ENCODE measurements at regions of chr1 and their contacts with region 1.

Region 1: DNA sequence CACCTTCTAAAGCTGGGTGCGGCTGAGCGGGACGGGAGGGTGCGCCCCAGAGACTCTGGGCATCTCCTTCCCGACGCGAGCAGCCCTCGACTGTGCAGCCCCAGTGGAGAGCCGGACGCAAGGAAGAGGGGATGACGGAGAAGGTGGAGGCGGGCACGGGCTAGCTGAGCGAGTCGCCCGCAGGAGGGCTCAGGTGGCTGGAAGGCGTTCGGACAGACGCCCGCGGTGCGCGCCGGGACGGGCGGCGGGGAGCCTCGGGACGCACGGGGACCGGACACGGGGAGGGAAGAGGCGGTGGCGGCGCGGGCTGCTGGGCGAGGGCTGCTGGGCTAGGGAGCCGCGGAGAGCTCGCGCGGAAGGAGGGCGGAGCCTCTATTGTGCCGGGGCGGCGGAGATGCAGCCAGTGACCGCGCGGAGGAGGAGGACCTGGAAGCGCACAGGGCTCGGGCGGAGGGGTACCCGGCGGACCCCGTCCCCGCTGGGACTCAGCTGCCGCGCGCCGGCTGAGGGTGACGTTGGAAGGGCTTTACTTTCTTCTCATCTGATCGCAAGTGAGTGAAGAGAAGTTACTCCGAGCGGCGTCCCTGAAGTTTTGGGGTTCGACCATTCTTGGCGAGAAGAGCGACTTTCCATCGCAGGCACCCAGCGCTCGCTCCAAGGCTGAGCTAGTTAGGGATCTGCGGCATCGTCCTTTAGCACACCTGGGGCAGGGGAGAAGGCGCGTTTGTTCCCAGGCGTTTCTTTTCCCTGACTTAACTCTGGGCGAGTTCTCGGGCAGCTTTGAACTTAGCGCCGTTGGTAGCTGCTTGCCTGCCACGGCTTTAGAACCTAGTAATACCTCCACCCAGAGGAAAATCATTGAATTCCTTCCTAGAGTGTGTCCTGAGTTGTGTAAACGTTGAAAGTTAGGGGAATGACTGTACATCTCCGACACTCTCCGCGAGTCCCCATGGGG is at the start of gene OLFML2B:
- DNase-seq: peak; percentile 60
- H3K4me3 ChIP-seq: peak within 1 kb of the TSS; percentile 37 to 64 (median 54)
- H3K27ac ChIP-seq: peak within 1 kb of the TSS; percentile 30 to 84 (median 68)
- H3K4me1 ChIP-seq: peaks cover 3 to 20% (median 14%) of the 10 kb centered on the region in 4 donors
- H3K27me3 ChIP-seq: peaks cover 21% of the 10 kb centered on the region
- CTCF ChIP-seq: no peak
- EP300 ChIP-seq: no peak
- POLR2A ChIP-seq: peak; percentile 25
- total RNA-seq, gene OLFML2B: 1.6 to 5.2 (median 3.7) TPM

Region 2: GRCh38 chr1:161342821-161343220 is 681.0 kb before region 1 on chr1:
- in situ Hi-C with region 1: no loop called
- intact Hi-C with region 1: loop called (anchors 10 kb)
- DNase-seq: no peak
- H3K4me3 ChIP-seq: no peak overlapping the region
- H3K27ac ChIP-seq: no peak overlapping the region
- H3K4me1 ChIP-seq: no peaks in the 10 kb centered on the region
- H3K27me3 ChIP-seq: no peaks in the 10 kb centered on the region
- CTCF ChIP-seq: no peak
- EP300 ChIP-seq: no peak
- POLR2A ChIP-seq: no peak

Region 3: GRCh38 chr1:161885003-161885402 is 138.8 kb before region 1 on chr1:
- in situ Hi-C with region 1: no loop called
- intact Hi-C with region 1: loop called (anchors 10 kb)
- DNase-seq: no peak
- H3K4me3 ChIP-seq: no peak overlapping the region
- H3K27ac ChIP-seq: peak overlapping the region in 3 of 4 donors; percentile 4 to 40 (median 9)
- H3K4me1 ChIP-seq: peaks cover 0 to 11% (median 5%) of the 10 kb centered on the region in 4 donors
- H3K27me3 ChIP-seq: no peaks in the 10 kb centered on the region
- CTCF ChIP-seq: no peak
- EP300 ChIP-seq: no peak
- POLR2A ChIP-seq: no peak

Region 4: DNA sequence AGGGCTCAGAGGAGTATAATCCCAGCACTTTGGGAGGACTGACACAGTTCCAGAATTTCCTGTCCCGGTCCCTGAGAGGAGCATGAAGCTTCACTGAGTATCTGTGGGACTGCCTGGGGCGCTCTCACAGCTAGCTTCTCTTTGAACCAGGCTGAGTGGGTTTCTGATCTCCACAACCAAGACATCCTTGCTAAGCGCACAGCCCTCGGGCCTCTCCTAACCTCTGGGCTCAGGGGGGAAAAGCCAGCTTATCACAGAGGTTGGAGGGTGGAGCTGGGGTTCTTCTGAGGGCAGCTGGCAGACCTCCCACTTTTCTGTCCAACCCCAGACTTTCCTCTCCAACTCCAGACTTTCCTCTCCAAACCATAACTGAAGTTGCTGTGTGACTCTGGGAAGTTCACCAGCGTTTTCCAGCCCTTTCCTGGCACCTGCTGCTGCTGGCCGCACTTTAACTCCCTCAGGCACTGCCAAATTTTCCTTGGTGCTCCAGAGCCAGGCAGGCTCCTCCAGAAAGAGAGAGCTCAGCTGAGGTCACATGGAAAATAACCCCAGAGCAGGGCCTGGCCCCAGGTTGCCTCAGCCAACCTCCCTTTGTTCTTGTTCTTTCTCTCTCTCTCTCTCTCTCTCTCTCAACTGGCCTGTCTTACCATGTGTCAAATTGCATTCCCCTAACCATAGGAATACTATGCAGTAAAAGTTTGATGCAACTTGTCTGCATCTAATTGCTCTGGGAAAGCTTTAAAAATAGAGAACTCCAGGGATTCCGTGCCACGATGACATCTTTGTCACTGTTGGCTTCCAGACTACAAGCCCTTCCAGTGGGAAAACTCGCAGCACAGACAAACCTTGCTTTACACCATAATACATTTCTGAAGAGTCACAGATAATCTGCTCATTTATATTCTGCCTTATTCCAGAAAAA is 49.6 kb before region 1 on chr1:
- in situ Hi-C with region 1: no loop called
- intact Hi-C with region 1: no loop called
- DNase-seq: no peak
- H3K4me3 ChIP-seq: no peak overlapping the region
- H3K27ac ChIP-seq: peak overlapping the region in 3 of 4 donors; percentile 11 to 31 (median 17)
- H3K4me1 ChIP-seq: peaks cover 0 to 8% (median 1%) of the 10 kb centered on the region in 4 donors
- H3K27me3 ChIP-seq: no peaks in the 10 kb centered on the region
- CTCF ChIP-seq: no peak
- EP300 ChIP-seq: no peak
- POLR2A ChIP-seq: no peak

Measured in transverse colon (tissue), 4 donors.